ENCODE measurements at regions of chr16 and their contacts with region 1.

Region 1: DNA sequence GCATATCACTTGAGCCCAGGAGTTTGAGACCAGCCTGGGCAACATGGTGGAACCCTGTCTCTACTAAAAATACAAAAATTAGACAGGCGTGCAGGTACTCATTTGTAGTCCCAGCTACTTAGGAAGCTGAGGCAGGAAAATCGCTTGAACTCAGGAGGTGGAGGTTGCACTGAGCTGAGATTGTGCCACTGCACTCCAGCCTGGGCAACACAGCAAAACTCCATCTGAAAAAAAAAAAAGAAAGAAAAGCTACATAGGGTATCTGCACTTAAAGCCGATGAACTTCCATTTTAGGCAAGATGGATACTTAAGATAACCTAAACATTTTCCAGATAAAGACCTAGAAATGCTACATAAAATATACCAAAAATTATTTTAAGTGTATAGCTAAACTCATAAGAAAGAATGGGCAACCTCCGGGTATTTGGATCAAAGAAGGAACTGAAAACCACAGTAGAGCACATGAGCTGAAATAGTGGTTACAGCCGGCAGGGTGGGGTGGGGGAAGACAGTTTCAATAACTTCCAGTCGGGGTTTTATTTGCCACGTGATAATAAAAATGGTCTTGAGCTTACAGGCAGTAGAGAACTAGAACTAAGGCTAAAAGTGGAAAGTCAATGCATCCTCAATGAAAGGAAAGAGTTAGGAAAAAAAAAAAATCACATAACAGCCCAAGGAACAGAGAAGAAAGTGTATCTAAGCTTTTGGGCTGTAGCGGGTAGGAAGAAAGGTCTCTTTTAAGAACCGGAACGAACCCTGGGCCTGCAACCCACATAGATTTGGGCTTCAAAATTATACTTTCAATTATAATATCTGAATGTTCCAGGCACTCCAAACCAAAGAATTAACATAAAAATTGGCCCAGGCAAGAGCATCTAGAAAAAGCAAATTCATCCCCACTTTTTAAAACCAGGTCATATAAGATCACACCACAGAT is 53.1 kb downstream of the CFDP1 start:
- DNase-seq: peak; percentile 21
- H3K4me3 Mint-ChIP-seq: peak overlapping the region; percentile 41
- H3K27ac Mint-ChIP-seq: peak overlapping the region; percentile 36
- H3K4me1 Mint-ChIP-seq: peaks cover 27% of the 10 kb centered on the region
- H3K27me3 Mint-ChIP-seq: peaks cover 40% of the 10 kb centered on the region

Region 2: GRCh38 chr16:74492976-74493375 is 887.2 kb before region 1 on chr16:
- intact Hi-C with region 1: loop called (anchors 5 kb)
- DNase-seq: no peak
- H3K4me3 Mint-ChIP-seq: no peak overlapping the region
- H3K27ac Mint-ChIP-seq: no peak overlapping the region
- H3K4me1 Mint-ChIP-seq: peaks cover 5% of the 10 kb centered on the region
- H3K27me3 Mint-ChIP-seq: no peaks in the 10 kb centered on the region

Region 3: GRCh38 chr16:75319513-75320411 is 60.4 kb before region 1 on chr16:
- intact Hi-C with region 1: loop called (anchors 1 kb)
- DNase-seq: peak; percentile 11
- H3K4me3 Mint-ChIP-seq: no peak overlapping the region
- H3K27ac Mint-ChIP-seq: no peak overlapping the region
- H3K4me1 Mint-ChIP-seq: peaks cover 28% of the 10 kb centered on the region
- H3K27me3 Mint-ChIP-seq: peaks cover 33% of the 10 kb centered on the region

Region 4: GRCh38 chr16:75402821-75403475 is 22.8 kb after region 1 on chr16:
- intact Hi-C with region 1: loop called (anchors 1 kb)
- DNase-seq: no peak
- H3K4me3 Mint-ChIP-seq: no peak overlapping the region
- H3K27ac Mint-ChIP-seq: peak overlapping the region; percentile 15
- H3K4me1 Mint-ChIP-seq: peaks cover 12% of the 10 kb centered on the region
- H3K27me3 Mint-ChIP-seq: no peaks in the 10 kb centered on the region

Region 5: DNA sequence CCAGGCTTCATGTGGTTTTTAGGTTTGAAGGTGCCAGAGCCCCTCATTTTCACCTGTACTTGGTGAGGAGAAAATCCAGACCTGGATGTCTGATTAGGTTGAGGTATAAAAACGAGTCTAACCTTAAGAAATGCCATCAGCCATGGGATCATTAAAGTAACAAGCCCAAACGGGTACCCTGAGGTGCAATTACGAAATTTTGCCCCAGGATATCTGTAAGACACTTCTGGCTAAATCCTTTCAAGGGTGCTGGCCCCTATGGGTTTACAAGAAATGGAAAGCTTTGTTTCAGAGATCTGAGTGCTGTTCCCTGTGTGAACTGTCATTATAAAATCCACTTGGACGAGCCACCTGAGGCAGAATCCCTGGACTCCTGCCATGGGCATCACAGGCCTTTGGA is 223.1 kb after region 1 on chr16:
- intact Hi-C with region 1: no loop called
- DNase-seq: no peak
- H3K4me3 Mint-ChIP-seq: no peak overlapping the region
- H3K27ac Mint-ChIP-seq: no peak overlapping the region
- H3K4me1 Mint-ChIP-seq: no peaks in the 10 kb centered on the region
- H3K27me3 Mint-ChIP-seq: no peaks in the 10 kb centered on the region

Measured in activated T-helper 1 cell treated with anti-CD3 and anti-CD28 coated beads, Interleukin-12 subunit alpha, Interleukin-12 subunit beta, Interleukin-2, Interleukin-4 antibody, amounts not matched to agents 30 ng/mL and 10 ng/mL and 1 ng/mL, durations not matched to agents 14 hours and 24 hours and 36 hours (primary cell).